ENCODE measurements at regions of chr2 and their contacts with region 1.

Region 1: GRCh38 chr2:20446917-20447436 is at the start of gene RHOB:
- DNase-seq: peak; percentile 87
- ATAC-seq: peak; percentile 96
- H3K4me3 Mint-ChIP-seq: peak within 1 kb of the TSS; percentile 88
- H3K27ac Mint-ChIP-seq: peak within 1 kb of the TSS; percentile 85
- H3K4me1 Mint-ChIP-seq: peaks cover 16% of the 10 kb centered on the region
- H3K27me3 Mint-ChIP-seq: peaks cover 2% of the 10 kb centered on the region
- CTCF ChIP-seq: no peak
- total RNA-seq, gene RHOB: 11.0 and 12.9 TPM in 2 replicates

Region 2: DNA sequence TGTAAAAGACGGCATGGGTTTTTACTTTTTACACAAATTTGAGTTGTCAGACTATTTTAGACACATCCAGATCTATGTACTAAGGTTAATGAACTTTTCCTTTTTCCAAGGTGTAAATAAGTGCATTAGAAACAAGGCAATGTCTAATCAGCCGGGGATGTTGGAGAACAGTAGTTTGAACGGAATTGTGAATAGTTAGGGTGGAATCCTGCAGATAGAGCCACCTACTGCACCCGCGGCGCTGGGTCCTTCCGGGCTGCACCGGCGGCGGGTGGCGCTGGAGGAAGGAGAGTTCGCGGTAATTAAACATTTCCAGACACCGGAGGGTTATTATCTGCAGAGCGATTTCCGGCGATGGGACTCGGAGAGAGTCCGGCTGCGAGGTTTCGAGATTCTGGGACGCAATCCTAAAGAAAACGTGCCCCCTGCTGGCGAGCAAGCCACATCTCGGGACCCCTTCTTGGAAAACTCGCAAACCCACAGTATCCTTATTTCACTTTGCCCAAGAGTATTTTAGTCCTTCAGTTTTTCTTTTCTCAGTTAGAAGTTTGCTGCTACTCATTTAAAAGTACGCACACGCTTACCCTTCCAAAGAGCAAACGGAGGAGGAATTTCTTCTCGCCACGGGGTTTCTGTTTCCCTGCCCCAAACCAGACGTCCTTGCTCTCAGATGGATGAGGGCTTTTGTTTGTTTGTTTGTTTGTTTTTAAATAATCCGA is 1084.1 kb before region 1 on chr2:
- CTCF ChIA-PET with region 1: no interaction called
- POLR2A ChIA-PET with region 1: no interaction called
- intact Hi-C with region 1: loop called (anchors 10 kb)
- DNase-seq: no peak
- ATAC-seq: peak; percentile 45
- H3K4me3 Mint-ChIP-seq: peak overlapping the region; percentile 86
- H3K27ac Mint-ChIP-seq: peak overlapping the region; percentile 64
- H3K4me1 Mint-ChIP-seq: peaks cover 38% of the 10 kb centered on the region
- H3K27me3 Mint-ChIP-seq: peaks cover 22% of the 10 kb centered on the region
- CTCF ChIP-seq: no peak

Region 3: DNA sequence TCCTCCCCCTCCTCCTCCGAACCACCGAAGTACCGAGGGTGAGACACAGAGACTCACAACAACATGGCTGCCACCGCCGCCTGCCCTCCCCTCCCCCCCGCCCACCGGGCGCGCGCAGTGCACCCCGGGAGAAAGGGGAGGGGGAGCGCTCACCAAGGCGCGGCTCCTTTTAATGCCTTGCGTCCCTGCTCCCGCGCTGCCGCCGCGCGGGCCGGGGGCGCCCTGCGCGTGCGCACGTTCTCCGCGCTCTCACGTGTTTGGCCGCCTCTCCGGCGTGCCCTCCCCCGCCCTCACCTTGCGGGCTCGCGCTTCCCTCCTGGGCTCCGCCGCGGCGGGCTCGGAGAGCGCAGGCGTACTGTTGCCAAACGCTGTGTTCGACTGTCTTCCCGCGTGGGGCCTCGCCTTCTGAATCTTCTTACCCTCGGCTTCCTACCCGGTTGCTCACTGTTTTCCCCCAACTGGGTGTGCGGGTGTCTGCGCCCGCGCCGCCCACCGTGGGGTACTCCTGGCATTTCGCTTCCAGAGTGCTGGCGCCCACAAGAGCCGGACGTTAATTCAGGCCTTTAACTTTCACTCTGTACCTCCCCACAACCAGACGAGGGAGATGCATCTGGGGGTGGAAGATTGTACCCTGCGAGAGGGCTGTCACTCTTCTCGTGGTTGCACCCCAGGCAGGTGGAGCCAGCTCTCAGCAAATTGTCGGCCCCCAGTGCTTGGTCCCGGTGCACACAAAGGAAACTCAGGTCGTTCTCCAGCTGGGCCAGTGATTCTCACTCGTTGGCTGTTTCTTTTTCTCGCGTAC is 96.0 kb before region 1 on chr2 and contains the start of gene PUM2:
- CTCF ChIA-PET with region 1: no interaction called
- POLR2A ChIA-PET with region 1: interaction called, 12 read pairs
- intact Hi-C with region 1: loop called (anchors 1 kb)
- DNase-seq: peak; percentile 96
- ATAC-seq: peak; percentile 83
- H3K4me3 Mint-ChIP-seq: peak within 1 kb of the TSS; percentile 92
- H3K27ac Mint-ChIP-seq: peak within 1 kb of the TSS; percentile 86
- H3K4me1 Mint-ChIP-seq: peaks cover 38% of the 10 kb centered on the region
- H3K27me3 Mint-ChIP-seq: no peaks in the 10 kb centered on the region
- CTCF ChIP-seq: no peak
- total RNA-seq, gene PUM2: 94.9 and 110 TPM in 2 replicates

Region 4: GRCh38 chr2:20525041-20526035 is 78.4 kb after region 1 on chr2:
- CTCF ChIA-PET with region 1: no interaction called
- POLR2A ChIA-PET with region 1: interaction called, 27 read pairs
- intact Hi-C with region 1: loop called (anchors 2 kb)
- DNase-seq: peak; percentile 40
- ATAC-seq: peak; percentile 94
- H3K4me3 Mint-ChIP-seq: peak overlapping the region; percentile 76
- H3K27ac Mint-ChIP-seq: peak overlapping the region; percentile 41
- H3K4me1 Mint-ChIP-seq: peaks cover 21% of the 10 kb centered on the region
- H3K27me3 Mint-ChIP-seq: no peaks in the 10 kb centered on the region
- CTCF ChIP-seq: no peak

Region 5: DNA sequence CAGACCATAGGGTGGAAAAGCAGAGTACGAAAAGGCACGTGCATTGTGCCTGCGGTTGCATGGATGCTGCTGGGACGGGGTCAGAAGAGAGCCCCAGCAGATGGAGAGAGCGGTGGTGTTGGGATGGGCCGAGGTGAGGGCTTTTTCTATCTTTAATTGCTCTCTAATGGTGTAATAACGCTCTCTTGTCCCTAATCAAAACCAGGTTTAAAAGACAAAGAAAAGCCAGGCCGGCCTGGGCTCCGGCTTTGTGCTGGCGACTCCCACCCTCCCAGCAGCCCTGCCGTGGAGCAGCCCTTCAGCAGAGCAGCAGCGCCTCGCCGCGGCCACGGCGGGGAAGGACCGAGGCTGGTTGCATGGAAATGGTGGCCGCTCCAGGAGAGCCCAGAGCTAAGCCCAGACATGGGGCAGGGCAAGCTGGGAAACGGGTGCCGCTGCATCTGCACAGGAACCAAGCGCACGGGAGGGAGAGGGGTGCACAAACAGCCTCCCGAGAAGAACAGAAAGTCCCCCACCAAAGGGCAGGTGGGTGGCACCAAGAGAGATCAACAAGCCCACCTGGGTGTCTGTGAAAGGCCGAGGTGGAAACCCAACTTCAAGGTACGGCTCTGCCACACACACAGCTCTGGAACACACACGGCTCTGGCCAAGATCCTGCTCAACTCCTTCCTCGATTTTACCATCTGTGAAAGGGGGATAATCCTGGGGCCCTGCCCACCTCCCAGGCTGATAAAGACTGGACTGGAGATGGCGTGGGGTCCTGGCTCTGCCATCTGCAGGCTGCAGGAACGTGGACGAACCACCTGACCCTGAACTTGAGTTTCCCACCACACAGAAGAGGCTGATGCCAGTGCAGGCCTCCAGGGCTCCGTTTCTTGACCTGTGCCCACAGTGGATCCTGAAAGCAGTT is 189.0 kb after region 1 on chr2:
- CTCF ChIA-PET with region 1: interaction called, 57 read pairs
- POLR2A ChIA-PET with region 1: interaction called, 10 read pairs
- intact Hi-C with region 1: loop called (anchors 1 kb)
- DNase-seq: peak; percentile 64
- ATAC-seq: peak; percentile 97
- H3K4me3 Mint-ChIP-seq: no peak overlapping the region
- H3K27ac Mint-ChIP-seq: no peak overlapping the region
- H3K4me1 Mint-ChIP-seq: peaks cover 8% of the 10 kb centered on the region
- H3K27me3 Mint-ChIP-seq: no peaks in the 10 kb centered on the region
- CTCF ChIP-seq: no peak

Region 6: GRCh38 chr2:20666304-20667150 is 219.6 kb after region 1 on chr2 and contains the start of gene GDF7:
- CTCF ChIA-PET with region 1: interaction called, 7 read pairs
- POLR2A ChIA-PET with region 1: interaction called, 27 read pairs
- intact Hi-C with region 1: no loop called
- DNase-seq: peak; percentile 67
- ATAC-seq: peak; percentile 78
- H3K4me3 Mint-ChIP-seq: peak within 1 kb of the TSS; percentile 87
- H3K27ac Mint-ChIP-seq: peak within 1 kb of the TSS; percentile 82
- H3K4me1 Mint-ChIP-seq: peaks cover 32% of the 10 kb centered on the region
- H3K27me3 Mint-ChIP-seq: peaks cover 8% of the 10 kb centered on the region
- CTCF ChIP-seq: no peak
- total RNA-seq, gene GDF7: 5.9 and 6.7 TPM in 2 replicates

Region 7: DNA sequence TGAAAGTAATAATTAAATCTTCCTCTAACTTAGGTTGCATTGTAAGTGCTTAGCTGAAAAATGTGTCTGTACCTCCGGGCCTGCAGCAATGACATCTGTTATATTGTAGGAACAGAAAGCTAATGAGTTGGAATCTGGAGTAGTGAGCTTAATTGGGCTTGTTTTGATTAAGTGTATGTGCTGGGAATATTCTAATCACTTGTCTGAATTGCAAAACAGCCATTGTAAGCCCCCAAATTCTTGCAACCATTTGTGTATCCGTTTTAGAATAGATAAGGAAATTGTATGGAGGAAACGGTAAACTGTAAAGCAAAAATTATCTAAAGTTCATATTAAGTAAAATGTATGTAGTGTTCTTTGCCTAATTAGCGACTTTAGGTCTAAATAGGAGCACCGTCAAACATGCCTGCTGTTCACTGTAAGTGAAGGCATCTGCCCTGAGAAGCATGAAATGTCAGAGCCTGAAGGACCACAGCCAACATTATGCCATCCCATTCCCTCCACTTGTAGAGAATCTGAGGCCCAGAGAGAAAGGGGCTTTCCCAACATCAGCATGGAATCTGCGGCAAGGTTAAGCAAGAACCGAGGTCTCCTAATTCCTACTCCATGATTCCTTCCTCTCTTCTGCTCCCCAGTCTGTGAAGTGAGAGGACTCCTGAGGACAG is 1143.2 kb after region 1 on chr2:
- CTCF ChIA-PET with region 1: no interaction called
- POLR2A ChIA-PET with region 1: no interaction called
- intact Hi-C with region 1: no loop called
- DNase-seq: no peak
- ATAC-seq: no peak
- H3K4me3 Mint-ChIP-seq: no peak overlapping the region
- H3K27ac Mint-ChIP-seq: no peak overlapping the region
- H3K4me1 Mint-ChIP-seq: no peaks in the 10 kb centered on the region
- H3K27me3 Mint-ChIP-seq: no peaks in the 10 kb centered on the region
- CTCF ChIP-seq: no peak